ENCODE measurements at regions of chr19 and their contacts with region 1.

Region 1: DNA sequence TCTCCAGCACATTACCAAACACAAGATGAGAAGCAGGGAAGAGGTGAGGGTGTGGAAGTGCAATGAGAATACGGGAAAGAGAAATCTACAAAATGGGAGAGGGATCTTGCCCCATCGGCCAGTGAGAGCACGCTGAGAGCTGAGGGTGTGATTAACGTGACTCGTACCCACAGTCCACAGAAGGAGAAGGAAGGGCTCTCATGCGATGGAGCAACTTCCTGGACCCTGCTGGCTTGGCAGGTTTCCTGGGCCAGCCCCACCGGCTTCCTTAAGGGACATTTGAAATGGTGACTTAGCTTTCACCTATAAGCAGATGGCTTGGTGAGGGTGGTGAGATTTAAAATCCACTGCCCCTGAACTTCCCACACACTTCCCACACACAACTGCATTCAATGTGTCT is 740.1 kb downstream of the UQCRFS1 start:
- DNase-seq: no peak
- ATAC-seq: peak in 2 of 4 donors; percentile 40 to 45
- H3K4me3 ChIP-seq: no peak overlapping the region
- H3K27ac ChIP-seq: no peak overlapping the region
- H3K4me1 ChIP-seq: no peaks in the 10 kb centered on the region
- H3K27me3 ChIP-seq: no peaks in the 10 kb centered on the region
- CTCF ChIP-seq: no peak

Region 2: GRCh38 chr19:28633319-28634018 is 160.6 kb after region 1 on chr19:
- intact Hi-C with region 1: loop called in 2 of 3 experiments (anchors 10 kb)
- DNase-seq: peak in 2 of 6 donors; percentile 40 to 45
- ATAC-seq: peak in 3 of 4 donors; percentile 74 to 87 (median 83)
- H3K4me3 ChIP-seq: no peak overlapping the region
- H3K27ac ChIP-seq: no peak overlapping the region
- H3K4me1 ChIP-seq: no peaks in the 10 kb centered on the region
- H3K27me3 ChIP-seq: no peaks in the 10 kb centered on the region
- CTCF ChIP-seq: peak; percentile 65 to 73 (median 69)

Measured in pancreas (tissue), 10 donors.